Vagina (tissue), 2 donors: ENCODE measurements at regions of chr2 and their contacts with region 1.

Region 1: DNA sequence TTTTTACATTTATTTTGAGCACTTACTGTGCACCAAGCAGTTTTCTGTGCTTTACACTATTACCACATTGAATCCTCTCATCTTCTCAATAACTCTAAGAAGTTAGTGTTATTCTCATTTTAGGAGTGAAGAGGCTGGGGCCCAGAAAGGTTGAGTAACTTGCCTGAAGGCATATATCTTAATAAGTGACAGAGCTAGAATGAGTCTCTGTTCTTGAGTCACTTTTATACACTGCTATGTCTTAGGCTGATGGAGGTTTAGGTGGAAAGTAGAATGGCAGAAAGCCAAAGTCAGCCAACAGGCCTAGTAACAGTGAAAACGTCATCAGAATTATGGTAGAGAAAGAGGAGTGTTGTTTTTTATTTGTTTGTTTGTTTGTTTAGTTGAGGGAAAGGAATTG is 27.9 kb upstream of the RPE start:
- DNase-seq: no peak
- H3K4me3 ChIP-seq: no peak overlapping the region
- H3K27ac ChIP-seq: no peak overlapping the region
- H3K4me1 ChIP-seq: no peaks in the 10 kb centered on the region
- H3K27me3 ChIP-seq: no peaks in the 10 kb centered on the region
- CTCF ChIP-seq: no peak
- POLR2A ChIP-seq: no peak

Region 2: DNA sequence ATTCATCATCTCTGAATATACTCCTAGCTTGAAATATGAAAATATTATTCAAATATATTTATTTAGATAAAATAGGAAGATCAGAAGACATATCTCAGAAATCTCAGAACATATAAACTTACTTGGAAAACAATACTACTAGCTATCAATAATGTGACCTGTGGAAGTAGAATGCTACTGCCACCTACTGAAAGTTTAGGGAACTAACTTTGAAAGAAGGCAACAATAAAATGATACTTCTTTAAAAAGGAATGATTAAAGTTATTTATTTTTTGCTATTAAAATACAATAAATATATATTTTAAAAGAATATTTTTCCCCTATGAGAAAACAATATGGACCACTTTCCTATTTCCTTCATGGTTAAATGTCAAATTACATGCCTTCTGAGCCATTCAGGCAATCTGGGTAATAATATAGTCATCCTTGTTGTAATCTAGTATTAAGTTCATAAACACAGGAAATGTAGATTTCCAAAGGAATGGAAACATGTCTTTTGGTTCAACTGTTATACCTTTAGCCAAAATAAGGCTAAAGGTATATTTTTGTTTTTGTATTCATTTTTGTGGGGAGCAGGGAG is 224.7 kb after region 1 on chr2:
- intact Hi-C with region 1: loop called (anchors 2 kb)
- DNase-seq: no peak
- H3K4me3 ChIP-seq: no peak overlapping the region
- H3K27ac ChIP-seq: no peak overlapping the region
- H3K4me1 ChIP-seq: no peaks in the 10 kb centered on the region
- H3K27me3 ChIP-seq: no peaks in the 10 kb centered on the region
- CTCF ChIP-seq: peak; percentile 33 to 60 (median 50)
- POLR2A ChIP-seq: no peak

Region 3: DNA sequence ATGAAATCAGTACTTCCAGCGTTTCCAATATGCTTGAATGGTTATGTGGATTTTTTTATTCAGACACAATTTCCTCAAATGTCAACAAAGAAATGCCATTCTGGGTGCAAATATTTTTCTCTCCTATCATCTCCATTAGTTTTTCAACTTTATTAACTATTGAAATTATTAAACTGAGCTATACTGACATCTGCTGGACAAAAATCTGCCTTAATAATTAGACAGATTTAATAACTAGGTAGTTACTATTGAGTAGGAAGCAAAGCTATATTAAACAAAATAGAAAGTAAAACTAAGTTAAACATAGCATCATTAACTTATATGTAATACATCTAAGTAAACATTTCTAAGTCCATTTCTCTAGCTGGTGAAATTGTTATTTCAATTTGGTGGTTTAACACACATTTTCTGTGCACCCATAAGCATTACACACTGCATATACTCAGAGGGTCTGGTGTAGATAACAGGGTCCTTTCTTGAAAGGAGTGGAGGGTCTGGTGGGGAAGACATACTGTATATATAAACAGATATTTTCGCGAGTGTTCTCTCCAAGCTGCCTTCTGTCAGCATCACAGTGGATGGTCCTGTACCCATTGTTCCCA is 425.0 kb after region 1 on chr2:
- intact Hi-C with region 1: no loop called
- DNase-seq: no peak
- H3K4me3 ChIP-seq: no peak overlapping the region
- H3K27ac ChIP-seq: no peak overlapping the region
- H3K4me1 ChIP-seq: no peaks in the 10 kb centered on the region
- H3K27me3 ChIP-seq: no peaks in the 10 kb centered on the region
- CTCF ChIP-seq: peak in 1 of 3 experiments; percentile 27
- POLR2A ChIP-seq: no peak